A673 (cell line): ENCODE measurements at regions of chr2 and their contacts with region 1.

Region 1: DNA sequence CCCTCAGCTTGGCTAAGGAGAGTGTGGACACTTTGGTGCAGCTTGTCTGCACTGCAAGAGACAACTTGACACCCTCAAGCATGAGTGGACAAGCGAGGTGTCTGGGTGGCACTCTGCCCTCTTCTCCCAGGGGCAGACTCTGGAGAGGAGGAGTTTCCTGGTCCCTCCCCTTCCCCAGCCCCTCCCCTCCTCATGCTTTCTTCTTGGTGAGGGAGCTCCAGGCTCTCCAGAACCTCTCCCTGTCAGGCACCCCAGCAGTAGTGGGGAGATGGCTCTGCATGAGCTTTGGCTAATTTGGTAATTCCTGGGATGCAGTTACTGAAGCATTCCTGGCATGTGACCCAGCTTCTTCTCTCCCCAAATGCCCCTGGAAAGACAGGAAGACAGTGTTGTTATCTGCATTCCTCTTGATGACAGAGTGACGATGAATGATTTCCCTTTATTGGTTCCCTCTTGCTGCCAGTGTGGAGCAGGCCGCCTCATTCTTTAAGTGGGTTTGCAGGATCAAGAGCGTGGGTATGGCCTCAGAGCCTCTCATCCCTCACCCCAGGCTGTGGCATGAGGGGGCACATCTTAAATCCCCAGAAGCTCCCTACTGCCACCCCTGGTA is 89.2 kb downstream of the STPG4 start:
- DNase-seq: peak; percentile 40
- H3K4me3 ChIP-seq: no peak overlapping the region
- H3K27ac ChIP-seq: no peak overlapping the region
- H3K4me1 ChIP-seq: peaks cover 8% of the 10 kb centered on the region
- H3K27me3 ChIP-seq: no peaks in the 10 kb centered on the region
- CTCF ChIP-seq: no peak

Region 2: DNA sequence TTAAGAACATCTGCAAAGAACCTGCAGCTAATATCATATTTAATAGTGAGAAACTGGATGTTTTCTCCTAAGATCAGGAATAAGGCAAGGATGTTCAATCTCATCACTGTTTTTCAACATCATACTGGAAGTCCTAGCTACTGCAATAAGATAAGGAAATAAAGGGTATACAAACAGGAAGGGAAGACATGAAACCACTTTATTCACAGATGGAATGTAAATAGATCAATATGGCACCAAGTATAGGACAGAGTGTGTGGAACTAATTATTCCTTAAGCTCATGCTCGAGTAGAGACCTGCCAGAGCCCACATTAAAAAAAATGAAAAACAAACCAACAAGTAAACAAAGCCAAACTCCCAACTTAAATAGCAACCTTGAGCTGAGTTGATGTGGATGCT is 627.8 kb before region 1 on chr2:
- CTCF ChIA-PET with region 1: no interaction called
- POLR2A ChIA-PET with region 1: interaction called, 20 read pairs
- intact Hi-C with region 1: no loop called
- DNase-seq: no peak
- H3K4me3 ChIP-seq: no peak overlapping the region
- H3K27ac ChIP-seq: no peak overlapping the region
- H3K4me1 ChIP-seq: no peaks in the 10 kb centered on the region
- H3K27me3 ChIP-seq: peaks cover 28% of the 10 kb centered on the region
- CTCF ChIP-seq: no peak

Region 3: DNA sequence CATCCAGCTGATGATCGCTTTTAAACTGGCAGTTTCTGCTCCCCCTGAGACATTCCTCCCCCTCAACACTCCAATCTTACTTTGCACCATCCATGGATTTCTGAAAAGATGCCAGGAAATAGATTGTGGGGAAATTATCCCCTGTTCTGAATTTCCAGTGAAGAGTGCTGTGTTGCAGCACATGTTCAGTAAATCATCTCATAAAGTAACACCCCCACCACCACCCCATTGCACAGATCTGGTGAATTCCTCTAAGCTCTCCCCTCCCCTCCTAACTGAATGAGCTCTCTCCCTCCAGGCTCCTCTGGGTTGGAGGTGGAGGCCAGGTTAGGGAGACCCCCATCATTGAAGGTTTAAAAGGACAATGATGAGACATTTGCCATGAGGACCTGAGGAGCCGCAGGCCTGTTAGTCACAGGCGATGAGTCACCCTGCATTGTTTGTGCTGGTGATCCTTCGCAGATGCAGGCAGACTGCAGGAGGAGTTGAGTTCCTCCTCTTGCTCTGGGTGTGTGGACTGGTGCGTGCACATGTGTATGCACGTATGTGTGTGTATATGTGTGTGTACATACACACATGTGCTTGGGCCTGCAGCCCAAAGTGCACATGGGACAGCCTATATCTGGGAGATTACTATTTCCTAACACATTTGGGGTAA is 192.4 kb before region 1 on chr2:
- CTCF ChIA-PET with region 1: no interaction called
- POLR2A ChIA-PET with region 1: no interaction called
- intact Hi-C with region 1: no loop called
- DNase-seq: peak; percentile 75
- H3K4me3 ChIP-seq: no peak overlapping the region
- H3K27ac ChIP-seq: no peak overlapping the region
- H3K4me1 ChIP-seq: peaks cover 12% of the 10 kb centered on the region
- H3K27me3 ChIP-seq: no peaks in the 10 kb centered on the region
- CTCF ChIP-seq: no peak

Region 4: DNA sequence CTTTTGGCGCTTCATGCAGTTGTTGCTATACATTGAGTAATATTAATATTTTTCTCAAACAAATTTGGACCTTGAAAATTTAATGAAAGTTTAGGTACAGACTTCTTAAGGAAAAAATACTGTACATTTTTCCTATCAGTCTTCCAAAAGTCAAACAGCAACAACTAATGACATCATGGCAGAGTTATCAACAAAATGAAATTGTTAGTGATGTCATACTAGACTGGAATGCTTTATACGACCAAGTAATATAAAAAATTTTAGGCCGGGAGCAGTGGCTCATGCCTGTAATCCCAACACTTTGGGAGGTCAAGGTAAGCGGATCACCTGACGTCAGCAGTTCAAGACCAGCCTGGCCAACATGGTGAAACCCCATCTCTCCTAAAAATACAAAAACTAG is 101.3 kb after region 1 on chr2:
- CTCF ChIA-PET with region 1: no interaction called
- POLR2A ChIA-PET with region 1: interaction called, 13 read pairs
- intact Hi-C with region 1: no loop called
- DNase-seq: no peak
- H3K4me3 ChIP-seq: no peak overlapping the region
- H3K27ac ChIP-seq: no peak overlapping the region
- H3K4me1 ChIP-seq: peaks cover 13% of the 10 kb centered on the region
- H3K27me3 ChIP-seq: no peaks in the 10 kb centered on the region
- CTCF ChIP-seq: no peak